Endothelial cell of umbilical vein (primary cell): ENCODE measurements at regions of chr6 and their contacts with region 1.

Region 1: DNA sequence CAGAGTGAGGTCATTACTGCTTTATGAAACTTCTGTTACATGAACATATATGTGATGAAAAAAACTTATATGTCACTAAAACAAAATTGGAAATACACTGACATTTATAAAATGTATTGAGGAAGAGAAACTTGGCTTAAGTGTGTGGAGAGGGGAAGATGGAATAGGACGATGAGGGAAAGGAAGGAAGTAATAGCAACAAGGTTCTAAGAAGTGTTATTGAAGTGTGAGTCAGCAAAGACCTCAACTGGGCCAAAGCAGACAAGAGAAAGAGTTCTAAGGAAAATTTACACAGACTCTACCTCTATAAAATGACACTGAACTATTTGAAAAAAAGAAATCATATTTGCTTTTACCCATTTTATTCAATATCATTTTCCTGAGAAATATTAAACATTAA is 38.3 kb downstream of the SNX3 start:
- DNase-seq: peak; percentile 46
- H3K4me3 ChIP-seq: no peak overlapping the region
- H3K27ac ChIP-seq: no peak overlapping the region
- H3K4me1 ChIP-seq: peaks cover 10% of the 10 kb centered on the region
- H3K27me3 ChIP-seq: no peaks in the 10 kb centered on the region
- CTCF ChIP-seq: no peak
- POLR2A ChIP-seq: no peak

Region 2: GRCh38 chr6:108207013-108207412 is 15.5 kb before region 1 on chr6:
- CTCF ChIA-PET with region 1: interaction called, 10 read pairs
- POLR2A ChIA-PET with region 1: no interaction called
- dilution Hi-C with region 1: no loop called
- intact Hi-C with region 1: no loop called
- DNase-seq: no peak
- H3K4me3 ChIP-seq: no peak overlapping the region
- H3K27ac ChIP-seq: no peak overlapping the region
- H3K4me1 ChIP-seq: no peaks in the 10 kb centered on the region
- H3K27me3 ChIP-seq: no peaks in the 10 kb centered on the region
- CTCF ChIP-seq: no peak
- POLR2A ChIP-seq: no peak

Region 3: GRCh38 chr6:108243836-108244235 is 21.3 kb after region 1 on chr6:
- CTCF ChIA-PET with region 1: no interaction called
- POLR2A ChIA-PET with region 1: no interaction called
- dilution Hi-C with region 1: no loop called
- intact Hi-C with region 1: no loop called
- DNase-seq: peak; percentile 27
- H3K4me3 ChIP-seq: no peak overlapping the region
- H3K27ac ChIP-seq: no peak overlapping the region
- H3K4me1 ChIP-seq: no peaks in the 10 kb centered on the region
- H3K27me3 ChIP-seq: no peaks in the 10 kb centered on the region
- CTCF ChIP-seq: no peak
- POLR2A ChIP-seq: no peak

Region 4: DNA sequence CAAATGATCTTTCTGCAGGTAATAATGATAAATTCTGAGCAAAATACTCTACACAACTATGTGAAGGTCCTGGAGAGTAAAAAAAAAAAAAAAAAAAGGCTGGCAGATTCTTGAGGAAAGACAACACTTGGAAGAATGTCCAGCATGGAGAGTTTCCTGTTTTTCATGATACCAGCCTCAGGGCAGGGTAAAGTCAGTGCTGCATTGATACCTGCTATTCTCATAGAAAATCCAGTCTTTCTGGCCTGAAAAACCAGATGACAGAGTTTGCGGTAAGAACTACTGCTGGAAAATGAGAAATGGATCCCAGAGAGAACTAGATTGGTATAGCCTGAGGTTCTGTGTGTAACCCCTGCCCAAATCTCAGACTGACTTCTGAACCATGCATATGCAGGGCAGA is 161.5 kb after region 1 on chr6:
- CTCF ChIA-PET with region 1: no interaction called
- POLR2A ChIA-PET with region 1: no interaction called
- dilution Hi-C with region 1: no loop called
- intact Hi-C with region 1: no loop called
- DNase-seq: peak; percentile 32
- H3K4me3 ChIP-seq: no peak overlapping the region
- H3K27ac ChIP-seq: no peak overlapping the region
- H3K4me1 ChIP-seq: no peaks in the 10 kb centered on the region
- H3K27me3 ChIP-seq: no peaks in the 10 kb centered on the region
- CTCF ChIP-seq: no peak
- POLR2A ChIP-seq: no peak